ENCODE measurements at regions of chr15 and their contacts with region 1.

Region 1: GRCh38 chr15:39963786-39964185 is 29.9 kb downstream of the EIF2AK4 start:
- DNase-seq: no peak
- H3K4me3 ChIP-seq: no peak overlapping the region
- H3K27ac ChIP-seq: no peak overlapping the region
- H3K4me1 ChIP-seq: no peaks in the 10 kb centered on the region
- H3K27me3 ChIP-seq: no peaks in the 10 kb centered on the region
- CTCF ChIP-seq: no peak
- POLR2A ChIP-seq: no peak

Region 2: GRCh38 chr15:38201714-38202113 is 1762.1 kb before region 1 on chr15:
- intact Hi-C with region 1: no loop called
- DNase-seq: no peak
- H3K4me3 ChIP-seq: no peak overlapping the region
- H3K27ac ChIP-seq: no peak overlapping the region
- H3K4me1 ChIP-seq: no peaks in the 10 kb centered on the region
- H3K27me3 ChIP-seq: no peaks in the 10 kb centered on the region
- CTCF ChIP-seq: no peak
- POLR2A ChIP-seq: no peak

Region 3: GRCh38 chr15:39939945-39940344 is 23.8 kb before region 1 on chr15:
- intact Hi-C with region 1: loop called (anchors 2 kb)
- DNase-seq: no peak
- H3K4me3 ChIP-seq: no peak overlapping the region
- H3K27ac ChIP-seq: no peak overlapping the region
- H3K4me1 ChIP-seq: no peaks in the 10 kb centered on the region
- H3K27me3 ChIP-seq: no peaks in the 10 kb centered on the region
- CTCF ChIP-seq: no peak
- POLR2A ChIP-seq: no peak

Measured in breast epithelium (tissue), 4 donors.